Activated CD4-positive, alpha-beta memory T cell treated with anti-CD3 and anti-CD28 coated beads for 36 hours (primary cell): ENCODE measurements at regions of chr1 and their contacts with region 1.

Region 1: GRCh38 chr1:44213222-44214112 is at the start of gene DMAP1:
- DNase-seq: peak; percentile 91
- H3K4me3 Mint-ChIP-seq: peak within 1 kb of the TSS; percentile 92
- H3K27ac Mint-ChIP-seq: peak within 1 kb of the TSS; percentile 90
- H3K4me1 Mint-ChIP-seq: peaks cover 33% of the 10 kb centered on the region
- H3K27me3 Mint-ChIP-seq: no peaks in the 10 kb centered on the region
- total RNA-seq, gene DMAP1: 31.1 to 32.8 TPM

Region 2: DNA sequence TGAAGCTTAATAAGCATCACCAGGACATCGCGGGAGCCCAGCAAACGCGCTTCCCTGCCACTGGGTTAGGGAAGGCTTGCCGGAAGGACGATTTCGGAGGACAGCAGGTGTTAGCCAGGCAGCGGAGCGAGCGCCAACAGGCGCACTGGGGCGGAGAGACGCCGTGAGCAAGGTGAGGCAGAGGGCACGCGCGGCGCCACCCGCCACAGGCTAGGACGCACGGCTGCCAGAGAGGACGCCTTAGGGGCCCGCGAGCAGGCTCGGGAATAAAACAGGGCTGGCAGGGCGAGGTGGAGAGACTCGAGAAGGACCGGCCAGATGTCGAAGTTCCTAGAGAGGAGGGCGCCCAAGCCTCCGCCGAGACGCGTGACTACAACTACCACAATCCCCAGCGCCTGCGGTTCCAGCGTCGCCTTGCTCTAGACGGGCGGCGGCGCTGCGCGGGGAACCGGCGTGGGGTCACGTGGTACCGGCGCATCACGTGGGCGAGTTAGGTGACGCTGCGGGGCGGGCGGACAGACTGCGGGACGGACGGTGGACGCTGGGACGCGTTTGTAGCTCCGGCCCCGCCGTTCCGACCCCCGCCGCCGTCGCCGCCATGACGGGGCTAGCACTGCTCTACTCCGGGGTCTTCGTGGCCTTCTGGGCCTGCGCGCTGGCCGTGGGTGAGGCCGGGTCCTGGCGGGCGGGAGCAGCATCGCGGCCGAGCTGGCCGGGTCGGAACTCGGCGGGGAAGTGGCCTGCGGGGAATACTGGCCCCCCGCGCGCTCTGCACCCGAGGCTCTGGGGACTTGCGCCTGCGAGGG is 238.8 kb before region 1 on chr1 and contains the start of gene ATP6V0B:
- CTCF ChIA-PET with region 1: no interaction called
- POLR2A ChIA-PET with region 1: no interaction called
- intact Hi-C with region 1: loop called (anchors 5 kb)
- DNase-seq: peak; percentile 98
- H3K4me3 Mint-ChIP-seq: peak within 1 kb of the TSS; percentile 83
- H3K27ac Mint-ChIP-seq: peak within 1 kb of the TSS; percentile 89
- H3K4me1 Mint-ChIP-seq: peaks cover 57% of the 10 kb centered on the region
- H3K27me3 Mint-ChIP-seq: no peaks in the 10 kb centered on the region
- total RNA-seq, gene ATP6V0B: 84.8 to 85.1 TPM

Region 3: DNA sequence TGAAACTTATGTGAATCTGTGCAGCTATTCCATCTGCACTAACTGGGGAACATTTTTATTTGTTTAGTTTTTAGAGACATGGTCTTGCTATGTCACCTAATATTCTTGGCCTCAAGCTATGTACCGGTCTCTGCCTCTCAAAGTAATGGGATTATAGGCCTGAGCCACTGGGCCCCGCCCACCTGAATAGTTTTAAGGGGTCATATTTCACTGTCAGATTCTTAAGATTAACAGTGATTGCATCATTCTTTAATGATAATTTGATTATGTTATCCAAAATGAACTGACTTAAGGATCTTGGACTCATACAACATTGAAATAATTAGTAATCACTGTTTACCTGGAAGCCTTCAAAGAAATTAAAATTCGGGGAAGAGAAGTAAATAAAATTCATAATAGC is 59.4 kb before region 1 on chr1:
- CTCF ChIA-PET with region 1: no interaction called
- POLR2A ChIA-PET with region 1: no interaction called
- intact Hi-C with region 1: no loop called
- DNase-seq: no peak
- H3K4me3 Mint-ChIP-seq: no peak overlapping the region
- H3K27ac Mint-ChIP-seq: no peak overlapping the region
- H3K4me1 Mint-ChIP-seq: peaks cover 8% of the 10 kb centered on the region
- H3K27me3 Mint-ChIP-seq: peaks cover 14% of the 10 kb centered on the region

Region 4: DNA sequence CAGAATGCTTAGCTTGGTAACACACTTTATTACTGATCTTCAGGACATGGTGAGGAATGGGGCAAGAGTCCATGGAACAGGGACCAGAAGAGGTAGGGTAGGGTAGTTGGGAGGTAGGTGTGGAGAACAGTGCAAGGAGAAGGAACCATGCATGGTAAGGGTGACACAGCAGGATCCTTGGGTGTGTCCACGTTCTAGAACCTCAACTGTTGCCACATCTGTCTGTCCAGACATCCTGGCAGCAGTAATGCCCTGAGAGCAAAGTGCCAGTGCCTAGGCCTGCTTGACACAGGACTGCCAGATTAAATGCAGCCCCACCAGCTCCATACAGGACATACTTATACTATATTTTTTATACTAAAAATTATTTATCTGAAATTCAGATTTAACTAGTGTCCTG is 13.7 kb after region 1 on chr1:
- CTCF ChIA-PET with region 1: interaction called, 11 read pairs
- POLR2A ChIA-PET with region 1: no interaction called
- intact Hi-C with region 1: no loop called
- DNase-seq: no peak
- H3K4me3 Mint-ChIP-seq: no peak overlapping the region
- H3K27ac Mint-ChIP-seq: no peak overlapping the region
- H3K4me1 Mint-ChIP-seq: peaks cover 3% of the 10 kb centered on the region
- H3K27me3 Mint-ChIP-seq: no peaks in the 10 kb centered on the region

Region 5: DNA sequence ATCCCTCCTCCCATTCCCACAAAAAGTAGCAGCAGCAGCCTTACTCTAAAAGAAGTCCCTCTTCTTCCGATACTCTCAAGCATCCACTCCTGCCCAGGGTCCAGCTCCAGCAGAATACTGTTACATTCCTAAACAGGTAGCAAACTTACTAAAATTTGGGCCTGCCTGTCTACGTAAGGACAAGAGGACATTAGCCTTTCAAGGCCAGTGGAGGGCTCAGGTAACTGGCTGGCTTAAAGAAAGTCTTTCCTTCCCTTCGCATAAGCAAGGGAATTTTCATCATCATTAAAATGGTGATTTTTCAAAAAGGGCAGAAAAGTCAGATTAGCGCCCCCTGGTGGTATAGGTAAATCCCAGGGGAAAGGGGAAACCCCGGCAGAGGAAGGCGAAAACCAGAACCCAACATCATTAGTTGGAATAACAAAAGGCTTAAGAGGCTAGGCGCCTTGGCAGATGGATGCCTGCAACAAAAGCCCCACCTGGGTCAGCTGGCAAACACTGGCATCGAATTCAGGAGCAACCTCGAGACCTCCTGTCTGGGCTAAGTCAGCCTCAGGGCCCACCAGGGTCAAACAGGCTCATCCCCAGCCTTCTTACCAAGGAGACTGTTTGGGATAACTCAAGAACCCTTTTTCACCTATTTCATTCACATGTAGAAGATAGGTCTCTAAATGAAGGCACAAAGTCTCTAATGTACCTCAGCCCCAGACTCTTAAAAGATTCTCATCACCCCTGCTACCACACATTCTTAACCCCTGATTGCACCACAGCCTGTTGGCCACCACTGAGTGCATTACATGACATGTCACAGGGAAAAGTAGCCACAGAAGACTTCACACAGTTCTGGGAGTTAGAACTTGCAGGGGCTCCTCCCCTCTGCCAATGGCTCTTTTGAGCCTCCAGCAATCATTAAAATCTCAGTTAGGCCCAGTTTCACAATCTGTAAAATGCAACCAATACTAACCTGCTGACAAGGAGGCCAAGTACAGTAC is 104.9 kb after region 1 on chr1:
- CTCF ChIA-PET with region 1: interaction called, 52 read pairs
- POLR2A ChIA-PET with region 1: no interaction called
- intact Hi-C with region 1: loop called (anchors 1 kb)
- DNase-seq: peak; percentile 44
- H3K4me3 Mint-ChIP-seq: no peak overlapping the region
- H3K27ac Mint-ChIP-seq: no peak overlapping the region
- H3K4me1 Mint-ChIP-seq: no peaks in the 10 kb centered on the region
- H3K27me3 Mint-ChIP-seq: no peaks in the 10 kb centered on the region

Region 6: DNA sequence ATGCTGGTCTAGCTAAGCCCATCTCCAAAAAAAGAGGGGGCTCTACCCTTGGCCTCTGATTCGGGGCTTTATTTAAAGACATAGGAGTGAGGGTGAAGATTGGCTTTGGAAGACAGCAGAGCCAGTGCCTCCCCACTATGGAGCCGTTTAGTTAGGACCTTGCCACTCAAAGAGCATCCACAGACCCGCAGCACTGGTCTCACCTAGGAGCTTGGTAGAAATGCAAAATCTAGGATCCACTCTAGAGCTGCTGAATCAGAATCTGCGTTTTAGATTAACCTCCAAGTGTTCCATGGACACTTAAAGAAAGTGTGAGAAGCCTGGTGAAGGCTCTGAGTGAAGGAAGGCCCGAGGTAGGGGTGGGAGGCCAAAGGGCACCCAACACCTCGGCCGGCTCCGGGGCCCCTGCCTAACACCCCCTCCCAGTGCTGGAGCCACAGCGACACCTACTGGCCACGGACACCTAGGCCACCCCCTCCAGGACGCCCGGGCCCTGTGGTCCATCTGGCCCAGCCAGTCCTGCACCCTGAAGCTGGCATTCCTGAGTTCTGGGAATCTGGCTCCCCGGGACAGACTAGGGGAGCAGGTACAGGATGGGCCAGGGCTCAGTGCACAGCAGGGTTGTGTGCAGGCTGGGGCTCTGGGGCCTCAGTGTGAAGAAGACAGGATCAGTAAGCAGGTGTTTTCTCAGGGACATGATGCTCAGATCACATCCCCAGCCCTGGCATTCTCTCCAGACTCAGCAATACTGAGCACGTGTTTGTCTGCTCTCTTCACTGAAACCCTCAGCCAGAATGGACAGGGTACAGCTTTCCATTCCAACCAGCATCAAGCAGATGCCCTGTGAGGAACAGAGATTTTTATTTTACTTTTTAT is 381.6 kb after region 1 on chr1:
- CTCF ChIA-PET with region 1: interaction called, 36 read pairs
- POLR2A ChIA-PET with region 1: no interaction called
- intact Hi-C with region 1: loop called (anchors 1 kb)
- DNase-seq: peak; percentile 87
- H3K4me3 Mint-ChIP-seq: no peak overlapping the region
- H3K27ac Mint-ChIP-seq: no peak overlapping the region
- H3K4me1 Mint-ChIP-seq: no peaks in the 10 kb centered on the region
- H3K27me3 Mint-ChIP-seq: peaks cover 5% of the 10 kb centered on the region